Esophagus squamous epithelium (tissue), 5 donors: ENCODE measurements at regions of chr12 and their contacts with region 1.

Region 1: GRCh38 chr12:92570056-92570753 is 132.6 kb upstream of the PLEKHG7 start:
- DNase-seq: no peak
- H3K4me3 ChIP-seq: no peak overlapping the region
- H3K27ac ChIP-seq: peak overlapping the region in 1 of 4 donors; percentile 10
- H3K4me1 ChIP-seq: peaks cover 0 to 21% (median 0%) of the 10 kb centered on the region in 3 donors
- H3K27me3 ChIP-seq: no peaks in the 10 kb centered on the region
- CTCF ChIP-seq: peak; percentile 70 to 91 (median 86)
- POLR2A ChIP-seq: no peak

Region 2: GRCh38 chr12:91382081-91382543 is 1188.1 kb before region 1 on chr12:
- intact Hi-C with region 1: loop called (anchors 10 kb)
- DNase-seq: no peak
- H3K4me3 ChIP-seq: peak overlapping the region; percentile 24 to 61 (median 40)
- H3K27ac ChIP-seq: peak overlapping the region in 3 of 4 donors; percentile 59 to 74 (median 69)
- H3K4me1 ChIP-seq: peaks cover 0 to 27% (median 0%) of the 10 kb centered on the region in 3 donors
- H3K27me3 ChIP-seq: no peaks in the 10 kb centered on the region
- CTCF ChIP-seq: peak; percentile 77 to 89 (median 86)
- POLR2A ChIP-seq: no peak

Region 3: DNA sequence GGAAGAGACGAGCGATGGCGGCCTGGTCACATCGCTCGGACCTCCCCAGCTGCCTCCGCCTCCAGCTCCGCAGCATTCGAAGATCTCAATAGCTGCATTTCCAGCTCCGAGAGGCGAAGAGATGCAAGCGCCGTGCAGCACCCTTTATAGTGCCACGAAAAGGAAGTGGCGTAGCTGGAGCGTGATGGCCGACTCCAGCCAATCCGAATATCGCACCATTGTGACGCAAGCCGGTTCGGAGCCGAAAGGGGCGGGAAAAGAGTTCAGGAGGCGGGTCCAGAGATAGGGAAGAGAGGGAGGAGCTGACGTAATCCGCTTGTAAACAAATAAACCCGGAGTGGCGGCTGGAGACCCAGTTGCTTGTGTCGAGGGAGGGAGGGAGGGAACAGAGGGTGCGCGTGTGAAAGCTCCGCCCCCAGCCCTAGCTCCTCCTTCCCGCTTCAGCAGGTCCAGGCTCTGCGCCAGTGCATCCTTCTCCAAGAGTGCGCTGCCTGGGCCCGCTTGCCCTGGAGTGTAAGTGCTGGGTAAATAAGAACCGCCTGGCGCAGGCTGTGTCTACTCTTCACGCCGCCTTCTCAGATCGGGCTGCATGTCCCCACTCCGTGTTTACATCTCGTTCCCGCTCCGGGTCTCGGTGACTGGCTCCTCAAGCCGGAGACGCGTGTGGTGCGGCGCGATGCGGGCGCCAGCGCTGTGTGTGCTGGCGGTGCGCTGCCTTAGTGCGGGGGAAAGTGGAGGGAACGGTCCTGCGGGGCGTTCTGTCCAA is 424.3 kb before region 1 on chr12 and contains the start of gene BTG1:
- intact Hi-C with region 1: loop called (anchors 10 kb)
- DNase-seq: peak; percentile 98
- H3K4me3 ChIP-seq: peak within 1 kb of the TSS; percentile 83 to 100 (median 94)
- H3K27ac ChIP-seq: peak within 1 kb of the TSS; percentile 98 to 100 (median 100)
- H3K4me1 ChIP-seq: peaks cover 0 to 54% (median 0%) of the 10 kb centered on the region in 3 donors
- H3K27me3 ChIP-seq: no peaks in the 10 kb centered on the region
- CTCF ChIP-seq: peak in 3 of 6 experiments; percentile 6 to 33 (median 13)
- POLR2A ChIP-seq: peak; percentile 84 to 100 (median 97)
- total RNA-seq, gene BTG1: 18.3 to 42.7 (median 35.3) TPM

Region 4: DNA sequence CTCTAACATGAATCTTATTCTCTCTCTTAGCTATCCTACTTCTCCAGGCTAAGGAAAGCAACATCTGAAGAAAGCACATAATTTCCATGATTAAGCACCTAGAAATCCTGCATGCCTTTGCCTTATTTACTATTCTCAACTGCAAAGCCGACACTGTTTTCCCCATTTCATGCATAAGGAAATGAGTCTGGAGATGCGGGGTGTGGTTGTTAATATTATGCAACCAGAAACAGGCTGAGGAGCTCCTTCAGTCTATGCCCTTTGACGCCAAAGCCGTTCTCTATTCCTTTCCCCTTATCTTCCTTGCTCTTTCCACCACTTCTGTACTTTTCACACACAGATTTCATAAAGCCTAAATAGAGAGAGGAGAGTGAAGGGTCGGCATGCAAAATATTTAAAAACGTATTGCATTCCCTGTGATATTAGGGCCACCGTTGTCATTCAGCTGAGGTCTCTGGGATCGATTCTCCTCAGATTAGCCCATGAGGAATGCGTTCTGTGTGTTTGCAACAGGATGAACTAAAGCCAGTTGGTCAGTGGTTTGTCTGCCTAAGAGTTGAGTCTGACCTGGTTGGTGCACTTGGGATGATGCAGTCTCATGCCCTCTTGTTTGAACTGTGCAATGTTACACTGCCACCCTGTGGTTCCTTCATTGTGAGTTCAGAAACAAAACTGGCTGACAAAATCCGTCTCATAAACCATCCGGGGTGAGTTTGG is 79.5 kb after region 1 on chr12:
- intact Hi-C with region 1: loop called (anchors 5 kb)
- DNase-seq: no peak
- H3K4me3 ChIP-seq: no peak overlapping the region
- H3K27ac ChIP-seq: no peak overlapping the region
- H3K4me1 ChIP-seq: peaks cover 0 to 7% (median 0%) of the 10 kb centered on the region in 3 donors
- H3K27me3 ChIP-seq: no peaks in the 10 kb centered on the region
- CTCF ChIP-seq: peak; percentile 56 to 80 (median 69)
- POLR2A ChIP-seq: no peak